Caco-2 (cell line): ENCODE measurements at regions of chr19 and their contacts with region 1.

Region 1: GRCh38 chr19:5547881-5548280 is 19.9 kb downstream of the TINCR start:
- DNase-seq: peak; percentile 53 to 54
- H3K4me3 ChIP-seq: no peak overlapping the region
- H3K4me3 Mint-ChIP-seq: no peak overlapping the region
- H3K27ac Mint-ChIP-seq: no peak overlapping the region
- H3K4me1 ChIP-seq: no peaks in the 10 kb centered on the region
- H3K4me1 Mint-ChIP-seq: no peaks in the 10 kb centered on the region
- H3K27me3 ChIP-seq: no peaks in the 10 kb centered on the region
- H3K27me3 Mint-ChIP-seq: no peaks in the 10 kb centered on the region
- CTCF ChIP-seq: peak; percentile 59 to 88

Region 2: DNA sequence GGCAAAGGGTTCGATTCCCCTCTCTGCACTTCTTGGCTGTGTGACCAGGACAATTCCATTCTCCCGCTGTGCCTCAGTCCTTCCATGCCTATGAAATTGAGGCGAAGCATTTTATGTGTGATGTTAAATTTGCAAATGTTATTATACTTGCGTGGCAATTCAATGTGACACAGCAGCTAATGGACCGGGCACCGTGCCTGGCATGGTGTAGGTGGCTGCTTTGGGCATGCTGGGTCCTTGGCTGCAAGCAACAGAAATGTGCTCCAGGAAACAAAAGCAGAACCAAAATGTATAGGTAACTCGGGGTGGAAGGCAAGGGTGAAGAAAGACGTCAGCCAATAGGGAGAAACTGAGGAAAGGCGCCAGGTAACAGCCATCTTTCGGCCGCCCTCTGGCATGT is 17.2 kb before region 1 on chr19:
- CTCF ChIA-PET with region 1: no interaction called
- POLR2A ChIA-PET with region 1: no interaction called
- intact Hi-C with region 1: no loop called
- DNase-seq: no peak
- H3K4me3 ChIP-seq: no peak overlapping the region
- H3K4me3 Mint-ChIP-seq: no peak overlapping the region
- H3K27ac Mint-ChIP-seq: no peak overlapping the region
- H3K4me1 ChIP-seq: no peaks in the 10 kb centered on the region
- H3K4me1 Mint-ChIP-seq: no peaks in the 10 kb centered on the region
- H3K27me3 ChIP-seq: no peaks in the 10 kb centered on the region
- H3K27me3 Mint-ChIP-seq: peaks cover 3% of the 10 kb centered on the region
- CTCF ChIP-seq: no peak

Region 3: DNA sequence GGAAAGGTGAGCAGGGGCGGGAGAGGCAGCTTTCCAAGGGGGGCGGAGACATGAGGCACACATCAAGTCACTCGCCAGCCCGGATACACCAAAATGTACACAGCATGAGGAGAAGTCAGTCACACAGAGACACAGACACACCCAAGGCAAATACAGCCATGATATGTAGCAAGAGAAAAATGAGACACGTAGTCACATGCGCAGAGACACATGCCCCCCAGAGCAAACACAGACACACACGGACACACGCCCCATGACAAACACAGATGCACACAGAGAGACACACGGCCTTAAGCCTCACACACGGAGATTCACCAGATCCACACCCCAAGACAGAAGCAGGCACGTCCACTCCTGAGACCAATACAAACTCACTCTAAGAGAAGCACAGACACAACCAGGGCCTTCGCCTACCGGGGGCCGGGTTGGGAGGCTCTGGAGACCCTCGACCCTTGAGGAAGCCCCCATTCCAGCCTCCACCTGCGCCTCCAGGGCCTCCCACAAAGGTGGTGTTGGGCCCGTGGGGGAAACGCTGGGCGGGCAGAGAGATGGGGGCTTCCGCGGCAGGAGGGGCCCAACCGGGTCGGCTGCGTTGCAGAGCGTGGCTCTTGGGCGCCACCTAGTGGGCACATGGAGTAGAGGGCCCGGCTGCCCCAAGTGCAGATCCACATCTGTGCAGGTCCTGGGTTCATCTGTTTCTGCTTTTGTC is 30.1 kb after region 1 on chr19:
- CTCF ChIA-PET with region 1: interaction called, 7 read pairs
- POLR2A ChIA-PET with region 1: no interaction called
- intact Hi-C with region 1: loop called (anchors 1 kb)
- DNase-seq: peak; percentile 69 to 83
- H3K4me3 ChIP-seq: peak overlapping the region; percentile 41
- H3K4me3 Mint-ChIP-seq: peak overlapping the region; percentile 73
- H3K27ac Mint-ChIP-seq: peak overlapping the region; percentile 63
- H3K4me1 ChIP-seq: peaks cover 12% of the 10 kb centered on the region
- H3K4me1 Mint-ChIP-seq: peaks cover 17% of the 10 kb centered on the region
- H3K27me3 ChIP-seq: no peaks in the 10 kb centered on the region
- H3K27me3 Mint-ChIP-seq: no peaks in the 10 kb centered on the region
- CTCF ChIP-seq: peak; percentile 92 to 97

Region 4: GRCh38 chr19:5661451-5661873 is 113.6 kb after region 1 on chr19:
- CTCF ChIA-PET with region 1: no interaction called
- POLR2A ChIA-PET with region 1: no interaction called
- intact Hi-C with region 1: no loop called
- DNase-seq: no peak
- H3K4me3 ChIP-seq: no peak overlapping the region
- H3K4me3 Mint-ChIP-seq: no peak overlapping the region
- H3K27ac Mint-ChIP-seq: no peak overlapping the region
- H3K4me1 ChIP-seq: no peaks in the 10 kb centered on the region
- H3K4me1 Mint-ChIP-seq: no peaks in the 10 kb centered on the region
- H3K27me3 ChIP-seq: no peaks in the 10 kb centered on the region
- H3K27me3 Mint-ChIP-seq: no peaks in the 10 kb centered on the region
- CTCF ChIP-seq: no peak